ENCODE measurements at regions of chr16 and their contacts with region 1.

Region 1: GRCh38 chr16:48623304-48624016 is 13.5 kb upstream of the N4BP1 start:
- DNase-seq: peak; percentile 88
- H3K4me3 ChIP-seq: peak overlapping the region; percentile 19 to 50 (median 30)
- H3K27ac ChIP-seq: peak overlapping the region; percentile 64 to 79 (median 72)
- H3K4me1 ChIP-seq: peaks cover 10 to 22% (median 12%) of the 10 kb centered on the region in 4 donors
- H3K27me3 ChIP-seq: no peaks in the 10 kb centered on the region
- CTCF ChIP-seq: peak; percentile 95 to 99 (median 98)
- EP300 ChIP-seq: no peak
- POLR2A ChIP-seq: peak; percentile 34

Region 2: GRCh38 chr16:48244080-48244862 is 379.2 kb before region 1 on chr16 and contains the start of gene LONP2:
- in situ Hi-C with region 1: loop called in 2 of 4 experiments (anchors 10 to 25 kb)
- intact Hi-C with region 1: no loop called
- DNase-seq: peak; percentile 93
- H3K4me3 ChIP-seq: peak within 1 kb of the TSS; percentile 77 to 99 (median 84)
- H3K27ac ChIP-seq: peak within 1 kb of the TSS; percentile 91 to 94 (median 92)
- H3K4me1 ChIP-seq: peaks cover 11 to 30% (median 24%) of the 10 kb centered on the region in 4 donors
- H3K27me3 ChIP-seq: no peaks in the 10 kb centered on the region
- CTCF ChIP-seq: peak in 1 of 5 experiments; percentile 9
- EP300 ChIP-seq: no peak
- POLR2A ChIP-seq: peak; percentile 79
- total RNA-seq, gene LONP2: 51.3 to 104 (median 65.3) TPM

Region 3: DNA sequence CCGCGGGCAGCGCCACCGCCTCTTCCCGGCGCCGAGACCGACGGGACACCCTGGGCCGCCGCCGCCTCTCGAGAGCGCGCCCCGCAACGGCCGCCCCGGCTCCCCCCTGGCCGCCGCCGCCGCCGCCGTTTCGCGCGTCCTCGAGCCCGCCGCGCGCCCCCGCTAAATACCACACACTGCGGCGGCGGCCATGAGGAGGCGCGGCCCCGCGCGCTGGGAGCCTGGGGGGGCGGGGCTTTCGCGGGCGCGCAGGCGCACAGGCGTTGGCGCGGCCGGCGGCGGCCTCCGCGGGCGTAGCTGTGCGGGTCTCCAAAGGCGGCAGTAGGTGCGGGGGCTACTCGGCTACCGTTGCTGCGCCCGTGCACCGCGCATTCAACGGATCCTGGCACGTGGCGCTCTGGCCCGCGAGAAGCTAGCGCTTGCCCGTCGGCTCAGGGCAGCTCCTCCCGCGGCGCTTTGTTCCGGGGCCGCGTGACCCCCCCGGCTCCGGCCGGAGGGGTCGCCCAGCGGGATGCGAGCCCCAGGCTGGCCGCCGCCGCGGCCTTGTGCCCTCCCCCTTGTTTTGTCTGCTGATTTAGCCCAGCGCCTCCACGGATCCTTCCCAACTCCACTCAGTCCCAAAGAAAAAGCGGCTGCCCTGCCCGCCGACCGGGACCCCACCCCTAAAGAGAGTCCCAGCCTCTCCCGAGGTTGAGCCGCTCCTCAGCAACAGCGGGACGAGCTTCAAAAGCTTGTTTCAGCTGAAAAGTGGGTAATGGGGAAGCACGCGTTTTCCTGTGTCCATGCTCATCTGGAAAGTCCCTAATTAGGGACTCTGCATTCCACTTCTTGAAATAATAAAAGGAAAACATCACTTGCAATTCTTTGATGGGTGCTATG is 237.9 kb before region 1 on chr16 and contains the start of gene SIAH1:
- in situ Hi-C with region 1: loop called in 1 of 4 experiments (anchors 25 kb)
- intact Hi-C with region 1: loop called (anchors 10 kb)
- DNase-seq: peak; percentile 88
- H3K4me3 ChIP-seq: peak within 1 kb of the TSS; percentile 87 to 99 (median 97)
- H3K27ac ChIP-seq: peak within 1 kb of the TSS; percentile 97 to 100 (median 100)
- H3K4me1 ChIP-seq: peaks cover 0 to 39% (median 24%) of the 10 kb centered on the region in 4 donors
- H3K27me3 ChIP-seq: no peaks in the 10 kb centered on the region
- CTCF ChIP-seq: no peak
- EP300 ChIP-seq: no peak
- POLR2A ChIP-seq: peak; percentile 64
- total RNA-seq, gene SIAH1: 15.1 to 45.9 (median 27.8) TPM

Region 4: GRCh38 chr16:48542020-48542473 is 81.4 kb before region 1 on chr16:
- in situ Hi-C with region 1: loop called in 2 of 4 experiments (anchors 10 kb)
- intact Hi-C with region 1: no loop called
- DNase-seq: peak; percentile 48
- H3K4me3 ChIP-seq: no peak overlapping the region
- H3K27ac ChIP-seq: no peak overlapping the region
- H3K4me1 ChIP-seq: peaks cover 10 to 36% (median 17%) of the 10 kb centered on the region in 4 donors
- H3K27me3 ChIP-seq: no peaks in the 10 kb centered on the region
- CTCF ChIP-seq: peak; percentile 35 to 52 (median 49)
- EP300 ChIP-seq: no peak
- POLR2A ChIP-seq: no peak

Region 5: DNA sequence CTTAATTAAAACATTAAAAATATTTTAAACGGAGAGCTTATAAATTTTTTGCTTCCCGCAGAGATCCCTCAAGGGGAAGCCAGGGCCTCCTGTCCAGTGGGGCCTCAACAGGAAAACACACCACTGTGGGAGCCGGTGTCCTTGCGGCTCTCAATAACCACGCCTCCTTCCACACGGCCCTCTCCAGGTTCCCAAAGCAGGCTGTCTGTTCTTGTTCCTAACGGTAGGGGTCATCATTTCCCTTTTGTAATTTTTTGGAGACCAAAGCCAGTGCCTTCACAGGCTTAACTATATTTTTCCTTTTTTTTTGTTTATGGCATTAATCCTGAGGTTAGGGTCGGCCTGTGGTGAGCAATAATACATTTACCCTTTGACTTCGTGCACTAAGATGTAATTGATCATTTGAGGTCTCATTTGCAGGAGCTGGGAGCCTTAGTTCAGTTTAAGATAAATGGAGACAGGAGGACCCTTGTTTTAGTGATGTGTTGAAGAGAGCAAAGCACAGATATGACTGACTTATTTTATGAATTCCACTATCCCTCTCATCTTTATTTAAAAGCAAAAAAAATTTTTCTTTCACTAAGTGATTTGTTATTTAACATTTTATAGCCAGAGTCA is 64.1 kb after region 1 on chr16:
- in situ Hi-C with region 1: no loop called
- intact Hi-C with region 1: no loop called
- DNase-seq: peak; percentile 18
- H3K4me3 ChIP-seq: no peak overlapping the region
- H3K27ac ChIP-seq: no peak overlapping the region
- H3K4me1 ChIP-seq: no peaks in the 10 kb centered on the region
- H3K27me3 ChIP-seq: no peaks in the 10 kb centered on the region
- CTCF ChIP-seq: peak; percentile 57 to 72 (median 66)
- EP300 ChIP-seq: no peak
- POLR2A ChIP-seq: no peak